IMR-90 (cell line): ENCODE measurements at regions of chr7 and their contacts with region 1.

Region 1: DNA sequence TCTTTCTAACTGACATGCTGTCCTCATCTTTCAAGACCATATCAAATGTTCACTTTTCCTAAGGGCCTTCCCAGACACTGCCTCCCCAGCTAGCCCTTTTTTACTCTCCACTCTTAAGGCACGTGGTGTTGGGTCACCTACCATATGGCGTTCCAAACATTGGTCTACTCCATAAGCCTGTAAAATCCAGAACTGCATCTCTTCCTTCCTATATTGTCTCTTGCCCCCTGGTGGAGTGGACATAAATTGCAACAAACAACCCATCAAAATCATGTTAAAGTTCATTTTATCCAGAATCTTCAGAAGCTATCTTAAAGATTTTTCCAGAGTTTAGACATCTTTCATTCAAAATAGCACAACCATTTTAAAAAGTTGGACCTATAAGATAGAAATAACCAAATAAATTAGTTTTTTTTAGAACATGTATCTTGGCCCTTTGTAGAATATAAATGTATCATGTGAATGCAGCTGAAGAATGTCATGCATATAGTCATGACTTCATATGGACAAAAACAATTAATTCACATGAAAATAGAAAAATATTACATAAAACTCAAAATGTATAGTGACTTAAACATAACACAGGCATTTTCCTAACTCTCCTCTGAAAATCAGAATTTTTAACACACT is 180.6 kb upstream of the CHRM2 start:
- DNase-seq: peak; percentile 39
- ATAC-seq: peak; percentile 67
- H3K4me3 ChIP-seq: no peak overlapping the region
- H3K27ac ChIP-seq: no peak overlapping the region
- H3K4me1 ChIP-seq: no peaks in the 10 kb centered on the region
- H3K27me3 ChIP-seq: peaks cover 3% of the 10 kb centered on the region
- CTCF ChIP-seq: peak; percentile 58
- POLR2A ChIP-seq: no peak
- RAD21 ChIP-seq: peak; percentile 51

Region 2: GRCh38 chr7:136405931-136406777 is 281.7 kb before region 1 on chr7:
- CTCF ChIA-PET with region 1: interaction called, 3 read pairs
- POLR2A ChIA-PET with region 1: no interaction called
- dilution Hi-C with region 1: no loop called
- in situ Hi-C with region 1: no loop called
- intact Hi-C with region 1: loop called (anchors 1 kb)
- DNase-seq: peak; percentile 53
- ATAC-seq: peak; percentile 94
- H3K4me3 ChIP-seq: no peak overlapping the region
- H3K27ac ChIP-seq: no peak overlapping the region
- H3K4me1 ChIP-seq: no peaks in the 10 kb centered on the region
- H3K27me3 ChIP-seq: no peaks in the 10 kb centered on the region; the same call in 1 of the 2 replicates
- CTCF ChIP-seq: peak; percentile 68
- POLR2A ChIP-seq: no peak
- RAD21 ChIP-seq: peak; percentile 62

Region 3: GRCh38 chr7:136502162-136502561 is 185.6 kb before region 1 on chr7:
- CTCF ChIA-PET with region 1: no interaction called
- POLR2A ChIA-PET with region 1: no interaction called
- dilution Hi-C with region 1: no loop called
- in situ Hi-C with region 1: no loop called
- intact Hi-C with region 1: loop called (anchors 5 kb)
- DNase-seq: no peak
- ATAC-seq: no peak
- H3K4me3 ChIP-seq: no peak overlapping the region
- H3K27ac ChIP-seq: no peak overlapping the region
- H3K4me1 ChIP-seq: no peaks in the 10 kb centered on the region
- H3K27me3 ChIP-seq: no peaks in the 10 kb centered on the region
- CTCF ChIP-seq: no peak
- POLR2A ChIP-seq: no peak
- RAD21 ChIP-seq: no peak